Naive thymus-derived CD8-positive, alpha-beta T cell (primary cell): ENCODE measurements at regions of chr4 and their contacts with region 1.

Region 1: DNA sequence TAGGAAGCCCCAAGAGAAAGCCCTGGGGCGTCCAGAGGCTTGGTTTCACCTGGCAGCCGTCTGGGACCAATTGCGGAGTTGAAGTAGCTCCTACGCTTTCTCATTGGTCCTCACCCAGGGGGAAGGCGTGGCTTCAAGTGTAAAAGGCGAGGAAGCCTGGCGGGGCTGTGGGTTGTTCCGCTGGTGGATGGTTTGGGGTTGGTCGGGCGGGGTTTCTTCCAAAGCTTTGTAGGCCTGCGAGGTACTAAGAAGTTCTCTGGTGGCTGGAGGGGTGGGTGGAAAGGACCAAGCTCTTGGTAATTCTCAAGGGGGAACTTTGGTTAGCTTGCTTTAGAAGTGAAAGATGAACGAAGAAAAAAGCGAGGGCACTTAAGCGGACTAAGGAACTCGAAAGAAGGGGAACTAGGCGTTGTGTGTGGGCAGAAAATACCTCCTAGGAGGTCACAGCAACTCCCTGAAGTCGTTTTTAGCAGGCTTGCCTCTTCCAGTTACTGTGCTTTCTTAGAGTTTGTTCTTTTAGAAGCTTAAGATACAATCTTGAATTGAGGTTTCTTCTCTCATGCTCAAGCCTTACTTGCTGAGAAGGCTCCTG is 36.6 kb downstream of the CCNG2 start:
- DNase-seq: peak; percentile 41 to 88 (median 70)
- ATAC-seq: peak; percentile 99
- H3K4me3 Mint-ChIP-seq: peak overlapping the region; percentile 84 to 95 (median 91)
- H3K27ac Mint-ChIP-seq: peak overlapping the region; percentile 82 to 96 (median 92)
- H3K4me1 Mint-ChIP-seq: peaks cover 12 to 41% (median 16%) of the 10 kb centered on the region in 4 donors
- H3K27me3 Mint-ChIP-seq: peaks cover 0 to 2% (median 0%) of the 10 kb centered on the region in 5 donors

Region 2: GRCh38 chr4:76758290-76758882 is 435.2 kb before region 1 on chr4:
- POLR2A ChIA-PET with region 1: no interaction called
- DNase-seq: peak in 2 of 10 donors; percentile 4 to 5
- ATAC-seq: no peak
- H3K4me3 Mint-ChIP-seq: no peak overlapping the region
- H3K27ac Mint-ChIP-seq: no peak overlapping the region
- H3K4me1 Mint-ChIP-seq: no peaks in the 10 kb centered on the region
- H3K27me3 Mint-ChIP-seq: peaks cover 0 to 7% (median 3%) of the 10 kb centered on the region in 5 donors

Region 3: GRCh38 chr4:77156533-77156911 is 37.1 kb before region 1 on chr4:
- POLR2A ChIA-PET with region 1: interaction called, 12 read pairs
- DNase-seq: peak in 9 of 10 donors; percentile 78 to 100 (median 98)
- ATAC-seq: peak; percentile 92 to 94
- H3K4me3 Mint-ChIP-seq: peak overlapping the region; percentile 95 to 100 (median 98)
- H3K27ac Mint-ChIP-seq: peak overlapping the region; percentile 96 to 100 (median 98)
- H3K4me1 Mint-ChIP-seq: peaks cover 13 to 71% (median 31%) of the 10 kb centered on the region in 4 donors
- H3K27me3 Mint-ChIP-seq: peaks cover 0 to 5% (median 0%) of the 10 kb centered on the region in 5 donors

Region 4: GRCh38 chr4:77177199-77177598 is 16.4 kb before region 1 on chr4:
- POLR2A ChIA-PET with region 1: no interaction called
- DNase-seq: no peak
- ATAC-seq: no peak
- H3K4me3 Mint-ChIP-seq: no peak overlapping the region
- H3K27ac Mint-ChIP-seq: no peak overlapping the region
- H3K4me1 Mint-ChIP-seq: no peaks in the 10 kb centered on the region
- H3K27me3 Mint-ChIP-seq: peaks cover 0 to 6% (median 0%) of the 10 kb centered on the region in 5 donors

Region 5: DNA sequence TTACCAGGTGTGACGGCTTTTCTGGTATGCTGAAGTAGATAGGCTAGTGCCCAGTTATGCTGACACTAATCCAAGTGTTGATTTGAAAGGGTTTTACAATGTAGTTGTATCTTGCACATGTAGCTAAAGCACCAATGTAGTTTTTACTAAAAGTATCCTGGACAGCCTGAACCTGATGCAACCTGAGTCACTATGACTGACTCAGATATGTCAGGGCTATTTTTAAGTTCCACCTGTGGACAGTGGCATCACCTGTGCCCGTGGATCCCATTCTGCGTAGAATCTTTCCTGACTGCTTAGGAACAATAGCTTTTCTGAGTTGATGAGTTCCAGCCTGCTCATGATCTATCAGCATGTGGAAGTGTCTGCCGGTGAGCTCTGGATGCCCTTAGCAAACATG is 21.5 kb after region 1 on chr4:
- POLR2A ChIA-PET with region 1: no interaction called
- DNase-seq: no peak
- ATAC-seq: no peak
- H3K4me3 Mint-ChIP-seq: no peak overlapping the region
- H3K27ac Mint-ChIP-seq: no peak overlapping the region
- H3K4me1 Mint-ChIP-seq: no peaks in the 10 kb centered on the region
- H3K27me3 Mint-ChIP-seq: no peaks in the 10 kb centered on the region